ENCODE measurements at regions of chr2 and their contacts with region 1.

Region 1: GRCh38 chr2:172555522-172556283 is at the start of gene PDK1:
- DNase-seq: peak; percentile 87 to 99
- H3K4me3 ChIP-seq: peak within 1 kb of the TSS; percentile 75
- H3K27ac ChIP-seq: peak within 1 kb of the TSS; percentile 65
- H3K4me1 ChIP-seq: peaks cover 58% of the 10 kb centered on the region
- H3K27me3 ChIP-seq: no peaks in the 10 kb centered on the region
- CTCF ChIP-seq: no peak
- total RNA-seq, gene PDK1: 15.9 and 18.5 TPM in 2 replicates

Region 2: GRCh38 chr2:171687287-171688128 is 868.2 kb before region 1 on chr2 and contains the start of gene DYNC1I2:
- CTCF ChIA-PET with region 1: no interaction called
- POLR2A ChIA-PET with region 1: interaction called, 4 read pairs
- intact Hi-C with region 1: loop called (anchors 5 kb)
- DNase-seq: peak; percentile 95 to 96
- H3K4me3 ChIP-seq: peak within 1 kb of the TSS; percentile 65
- H3K27ac ChIP-seq: peak within 1 kb of the TSS; percentile 65
- H3K4me1 ChIP-seq: peaks cover 11% of the 10 kb centered on the region
- H3K27me3 ChIP-seq: 0 out of 2 replicates have a peak, but pooled peaks cover 4% of the 10 kb centered on the region
- CTCF ChIP-seq: no peak
- total RNA-seq, gene DYNC1I2: 140 and 151 TPM in 2 replicates

Region 3: GRCh38 chr2:172246649-172247048 is 309.1 kb before region 1 on chr2:
- CTCF ChIA-PET with region 1: no interaction called
- POLR2A ChIA-PET with region 1: no interaction called
- intact Hi-C with region 1: loop called (anchors 5 kb)
- DNase-seq: peak in 1 of 2 experiments; percentile 46
- H3K4me3 ChIP-seq: no peak overlapping the region
- H3K27ac ChIP-seq: peak overlapping the region; percentile 70
- H3K4me1 ChIP-seq: peaks cover 62% of the 10 kb centered on the region
- H3K27me3 ChIP-seq: no peaks in the 10 kb centered on the region
- CTCF ChIP-seq: no peak

Region 4: GRCh38 chr2:172484253-172484652 is 71.5 kb before region 1 on chr2:
- CTCF ChIA-PET with region 1: interaction called, 6 read pairs
- POLR2A ChIA-PET with region 1: no interaction called
- intact Hi-C with region 1: loop called (anchors 5 kb)
- DNase-seq: no peak
- H3K4me3 ChIP-seq: no peak overlapping the region
- H3K27ac ChIP-seq: no peak overlapping the region
- H3K4me1 ChIP-seq: 0 out of 2 replicates have a peak, but pooled peaks cover 5% of the 10 kb centered on the region
- H3K27me3 ChIP-seq: no peaks in the 10 kb centered on the region
- CTCF ChIP-seq: peak; percentile 89

Region 5: GRCh38 chr2:172710584-172711024 is 154.9 kb after region 1 on chr2:
- CTCF ChIA-PET with region 1: interaction called, 3 read pairs
- POLR2A ChIA-PET with region 1: no interaction called
- intact Hi-C with region 1: loop called (anchors 1 kb)
- DNase-seq: peak; percentile 82 to 100
- H3K4me3 ChIP-seq: no peak overlapping the region
- H3K27ac ChIP-seq: no peak overlapping the region
- H3K4me1 ChIP-seq: peaks cover 10% of the 10 kb centered on the region
- H3K27me3 ChIP-seq: no peaks in the 10 kb centered on the region
- CTCF ChIP-seq: peak; percentile 99

Measured in PC-9 (cell line).